ENCODE measurements at regions of chr13 and their contacts with region 1.

Region 1: GRCh38 chr13:32427852-32428580 is at the start of gene N4BP2L1:
- DNase-seq: peak; percentile 82 to 92
- H3K4me3 ChIP-seq: peak within 1 kb of the TSS; percentile 76 to 81
- H3K27ac ChIP-seq: peak within 1 kb of the TSS; percentile 94 to 98
- H3K4me1 ChIP-seq: peaks cover 0 to 25% (median 17%) of the 10 kb centered on the region in 4 donors
- H3K27me3 ChIP-seq: no peaks in the 10 kb centered on the region
- CTCF ChIP-seq: no peak

Region 2: GRCh38 chr13:31930901-31931522 is 497.0 kb before region 1 on chr13:
- intact Hi-C with region 1: no loop called
- DNase-seq: no peak
- H3K4me3 ChIP-seq: no peak overlapping the region
- H3K27ac ChIP-seq: no peak overlapping the region
- H3K4me1 ChIP-seq: peaks cover 0 to 32% (median 5%) of the 10 kb centered on the region in 4 donors
- H3K27me3 ChIP-seq: no peaks in the 10 kb centered on the region
- CTCF ChIP-seq: no peak

Region 3: GRCh38 chr13:32538621-32539246 is 110.7 kb after region 1 on chr13 and contains the start of gene N4BP2L2:
- intact Hi-C with region 1: loop called (anchors 5 kb)
- DNase-seq: peak; percentile 97
- H3K4me3 ChIP-seq: peak within 1 kb of the TSS; percentile 66 to 82
- H3K27ac ChIP-seq: peak within 1 kb of the TSS; percentile 86 to 91
- H3K4me1 ChIP-seq: peaks cover 0 to 39% (median 28%) of the 10 kb centered on the region in 4 donors
- H3K27me3 ChIP-seq: no peaks in the 10 kb centered on the region
- CTCF ChIP-seq: peak; percentile 31 to 36

Region 4: GRCh38 chr13:33846444-33847062 is 1418.5 kb after region 1 on chr13:
- intact Hi-C with region 1: no loop called
- DNase-seq: no peak
- H3K4me3 ChIP-seq: no peak overlapping the region
- H3K27ac ChIP-seq: no peak overlapping the region
- H3K4me1 ChIP-seq: no peaks in the 10 kb centered on the region
- H3K27me3 ChIP-seq: no peaks in the 10 kb centered on the region
- CTCF ChIP-seq: no peak